B cell (primary cell): ENCODE measurements at regions of chr5 and their contacts with region 1.

Region 1: DNA sequence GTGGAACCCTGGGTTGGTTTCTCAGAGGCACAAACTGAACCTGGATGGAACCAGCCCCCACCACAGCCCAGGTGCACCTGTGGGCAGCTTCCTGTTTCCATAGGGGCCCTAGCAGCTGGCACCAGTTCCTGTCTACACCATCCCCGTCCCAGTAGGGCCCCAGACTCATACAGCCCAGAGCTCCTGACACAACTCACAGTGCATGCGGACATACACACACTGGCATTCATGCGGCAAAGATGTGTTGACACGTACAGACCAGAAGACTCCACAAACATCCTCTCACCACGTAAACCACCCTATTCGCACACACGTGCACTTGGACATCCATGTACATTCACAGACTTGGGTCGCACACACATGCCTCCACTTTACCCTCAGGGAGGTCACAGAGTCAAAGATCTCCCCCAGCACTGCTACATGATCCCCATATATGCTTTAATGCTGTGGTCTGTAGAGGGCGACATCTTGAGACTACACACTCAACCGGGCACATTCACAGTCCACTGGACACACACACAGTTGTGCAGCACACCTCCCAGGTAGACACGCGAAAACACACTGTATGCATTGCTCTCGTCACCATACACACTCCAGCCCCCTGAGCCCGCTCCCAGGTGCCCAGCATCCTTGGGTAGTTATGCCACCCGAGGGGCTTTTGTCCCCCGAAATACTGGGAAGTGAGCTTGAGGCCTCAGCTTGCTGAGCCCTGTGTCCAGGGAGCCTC is 22.4 kb downstream of the CXXC5 start:
- DNase-seq: peak; percentile 89
- ATAC-seq: peak; percentile 69
- H3K4me3 ChIP-seq: peak overlapping the region in 4 of 5 experiments; percentile 40 to 71 (median 52)
- H3K4me3 Mint-ChIP-seq: peak overlapping the region; percentile 86
- H3K27ac ChIP-seq: peak overlapping the region; percentile 89 to 90
- H3K27ac Mint-ChIP-seq: peak overlapping the region; percentile 95
- H3K4me1 ChIP-seq: peaks cover 88 to 98% of the 10 kb centered on the region in 2 donors
- H3K4me1 Mint-ChIP-seq: peaks cover 88% of the 10 kb centered on the region
- H3K27me3 ChIP-seq: no peaks in the 10 kb centered on the region
- H3K27me3 Mint-ChIP-seq: no peaks in the 10 kb centered on the region
- CTCF ChIP-seq: peak; percentile 47

Region 2: DNA sequence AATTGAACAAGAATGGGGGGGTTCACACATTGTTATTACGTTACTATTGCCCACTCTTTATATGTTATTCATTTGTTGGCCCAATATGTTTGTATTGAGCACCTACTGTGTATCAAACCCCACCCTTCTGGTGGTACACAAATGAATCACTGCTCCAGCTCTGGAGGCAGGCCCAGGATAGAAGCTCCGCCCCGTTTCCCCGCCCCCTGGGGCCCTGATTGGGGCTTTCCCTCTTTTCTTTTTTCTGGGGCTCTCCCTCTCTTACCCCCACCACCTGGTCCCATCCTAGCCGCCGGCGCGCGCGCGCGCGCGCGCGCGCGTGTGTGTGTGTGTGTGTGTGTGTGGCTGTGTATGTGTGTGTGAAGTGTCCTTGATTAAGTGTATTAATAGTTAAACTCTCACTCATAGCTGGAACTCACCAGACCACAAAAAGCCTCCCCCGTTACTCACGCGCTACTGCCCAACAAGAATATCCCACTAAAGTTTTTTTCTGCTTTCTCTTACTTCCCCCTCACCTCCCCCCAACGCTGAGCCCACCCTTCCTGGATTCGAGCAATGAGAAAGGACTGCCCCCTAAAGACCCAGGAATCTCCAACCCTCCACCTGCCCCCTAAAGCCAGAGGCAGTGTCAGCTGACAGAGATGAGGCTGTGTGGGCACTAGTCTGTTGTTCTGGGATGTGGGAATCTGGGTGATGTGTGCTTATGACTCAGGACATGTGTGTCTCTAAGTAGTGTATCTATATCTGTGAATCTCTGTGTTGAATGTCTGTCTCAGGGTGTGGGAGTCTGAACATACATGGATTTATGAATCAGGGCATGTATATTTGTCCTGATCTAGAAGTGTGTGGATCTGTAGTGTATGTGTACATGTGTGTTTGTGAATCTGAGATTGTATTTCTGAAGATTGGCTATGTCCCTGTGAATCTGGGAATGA is 18.4 kb before region 1 on chr5:
- CTCF ChIA-PET with region 1: interaction called, 188 read pairs
- POLR2A ChIA-PET with region 1: interaction called, 266 read pairs
- intact Hi-C with region 1: loop called (anchors 1 kb)
- DNase-seq: peak; percentile 92
- ATAC-seq: peak; percentile 50
- H3K4me3 ChIP-seq: peak overlapping the region; percentile 50 to 98 (median 95)
- H3K4me3 Mint-ChIP-seq: peak overlapping the region; percentile 88
- H3K27ac ChIP-seq: peak overlapping the region; percentile 71 to 90
- H3K27ac Mint-ChIP-seq: peak overlapping the region; percentile 94
- H3K4me1 ChIP-seq: peaks cover 68 to 74% of the 10 kb centered on the region in 2 donors
- H3K4me1 Mint-ChIP-seq: peaks cover 71% of the 10 kb centered on the region
- H3K27me3 ChIP-seq: no peaks in the 10 kb centered on the region
- H3K27me3 Mint-ChIP-seq: no peaks in the 10 kb centered on the region
- CTCF ChIP-seq: no peak

Region 3: DNA sequence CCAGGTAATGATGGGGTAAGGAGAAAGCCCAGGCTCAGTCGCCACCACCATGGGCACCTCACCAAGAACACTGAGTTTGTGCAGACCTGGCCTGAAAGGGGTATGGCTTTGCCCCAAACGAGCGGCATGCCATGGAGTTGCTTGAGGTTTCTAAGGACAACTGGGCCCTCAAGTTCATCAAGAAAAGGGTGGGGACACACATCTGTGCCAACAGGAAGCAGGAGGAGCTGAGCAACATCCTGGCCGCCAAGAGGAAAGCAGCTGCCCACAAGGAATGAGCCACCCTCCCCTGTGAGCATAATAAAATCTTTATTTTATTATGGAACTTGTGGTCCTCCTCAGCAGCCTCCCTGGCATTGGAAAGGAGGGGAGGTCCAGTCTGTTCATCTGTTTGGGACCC is 938.6 kb after region 1 on chr5:
- CTCF ChIA-PET with region 1: no interaction called
- POLR2A ChIA-PET with region 1: no interaction called
- intact Hi-C with region 1: no loop called
- DNase-seq: no peak
- ATAC-seq: no peak
- H3K4me3 ChIP-seq: no peak overlapping the region
- H3K4me3 Mint-ChIP-seq: no peak overlapping the region
- H3K27ac ChIP-seq: no peak overlapping the region
- H3K27ac Mint-ChIP-seq: no peak overlapping the region
- H3K4me1 ChIP-seq: peaks cover 13 to 15% of the 10 kb centered on the region in 2 donors
- H3K4me1 Mint-ChIP-seq: peaks cover 16% of the 10 kb centered on the region
- H3K27me3 ChIP-seq: no peaks in the 10 kb centered on the region
- H3K27me3 Mint-ChIP-seq: peaks cover 3% of the 10 kb centered on the region
- CTCF ChIP-seq: no peak